ENCODE measurements at regions of chr17 and their contacts with region 1.

Region 1: GRCh38 chr17:76523084-76524037 is 14.1 kb downstream of the CYGB start:
- DNase-seq: peak; percentile 88
- ATAC-seq: peak; percentile 79
- H3K4me3 Mint-ChIP-seq: peak overlapping the region; percentile 29; the same call in 1 of the 2 replicates
- H3K27ac Mint-ChIP-seq: no peak overlapping the region
- H3K4me1 Mint-ChIP-seq: peaks cover 21% of the 10 kb centered on the region
- H3K27me3 Mint-ChIP-seq: peaks cover 24% of the 10 kb centered on the region
- CTCF ChIP-seq: peak; percentile 99

Region 2: DNA sequence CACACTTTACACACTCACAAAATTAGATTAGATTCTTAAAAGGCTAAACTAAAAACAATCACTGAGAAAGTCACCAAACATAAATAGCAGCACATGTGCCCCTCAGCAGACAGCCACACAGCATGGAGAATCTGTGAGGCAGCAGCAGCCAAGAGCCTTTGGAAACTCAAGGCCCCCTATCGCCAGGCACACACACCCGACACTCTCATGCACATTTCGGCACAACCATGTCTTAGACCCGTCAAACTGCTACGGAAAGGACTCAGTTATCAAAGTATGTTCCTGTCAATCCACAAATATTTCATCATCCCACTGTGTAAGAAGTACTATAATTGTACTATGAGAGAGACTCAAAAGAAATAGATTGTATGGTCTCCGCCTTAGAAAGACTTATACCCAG is 91.4 kb before region 1 on chr17:
- CTCF ChIA-PET with region 1: no interaction called
- POLR2A ChIA-PET with region 1: no interaction called
- DNase-seq: no peak
- ATAC-seq: peak; percentile 26; the same call in 1 of the 2 replicates
- H3K4me3 Mint-ChIP-seq: no peak overlapping the region
- H3K27ac Mint-ChIP-seq: peak overlapping the region; percentile 43
- H3K4me1 Mint-ChIP-seq: peaks cover 65% of the 10 kb centered on the region
- H3K27me3 Mint-ChIP-seq: no peaks in the 10 kb centered on the region
- CTCF ChIP-seq: no peak

Region 3: GRCh38 chr17:76467366-76467765 is 56.0 kb before region 1 on chr17 and contains the start of gene AANAT:
- CTCF ChIA-PET with region 1: interaction called, 14 read pairs
- POLR2A ChIA-PET with region 1: no interaction called
- DNase-seq: no peak
- ATAC-seq: no peak; the same call in 1 of the 2 replicates
- H3K4me3 Mint-ChIP-seq: no peak within 1 kb of the TSS
- H3K27ac Mint-ChIP-seq: no peak within 1 kb of the TSS
- H3K4me1 Mint-ChIP-seq: peaks cover 8% of the 10 kb centered on the region
- H3K27me3 Mint-ChIP-seq: no peaks in the 10 kb centered on the region; the same call in 1 of the 2 replicates
- CTCF ChIP-seq: no peak
- total RNA-seq, gene AANAT: 0.17 to 0.57 TPM in 2 of 3 replicates, not detected in the other

Region 4: DNA sequence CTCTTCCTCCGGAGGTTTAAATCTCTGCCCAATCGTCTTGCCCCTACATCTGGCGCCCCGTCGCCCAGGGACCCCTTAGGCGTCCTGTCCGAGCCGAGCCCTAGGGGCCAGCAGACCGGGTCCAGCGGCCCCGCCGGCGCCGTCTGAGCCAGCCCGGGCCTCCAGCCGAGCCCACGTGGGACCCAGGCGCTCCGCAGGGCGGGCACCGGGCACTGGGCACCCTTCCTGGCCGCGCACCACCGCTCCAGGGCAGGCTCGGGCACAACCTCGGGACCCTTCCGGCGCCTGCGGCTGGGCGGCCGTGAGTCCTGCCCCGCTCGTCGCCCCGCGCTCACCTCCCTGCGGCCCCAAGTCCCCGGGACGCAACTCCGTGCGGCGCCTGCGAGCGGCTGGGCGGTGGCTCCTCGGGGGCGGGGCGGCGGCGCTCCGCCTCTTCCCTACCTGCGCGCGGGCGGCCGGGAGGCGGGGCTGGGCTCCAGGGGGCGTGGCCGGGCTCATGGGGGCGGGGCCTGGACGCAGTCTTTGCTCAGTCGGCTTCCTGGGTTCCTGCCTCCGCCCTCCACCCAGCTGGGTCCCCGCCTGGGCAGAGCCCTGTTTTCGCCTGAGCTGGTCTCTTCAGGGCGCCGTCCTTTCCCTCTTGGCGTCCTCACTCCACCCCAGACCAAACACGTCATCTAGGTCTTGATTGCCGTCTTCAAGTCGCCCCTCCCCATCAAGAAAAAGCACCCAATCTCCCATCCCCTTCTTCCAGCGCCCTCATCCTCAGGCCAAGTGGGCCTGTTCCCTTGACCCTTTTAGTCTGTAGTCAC is 22.1 kb before region 1 on chr17 and contains the start of gene RHBDF2:
- CTCF ChIA-PET with region 1: interaction called, 40 read pairs
- POLR2A ChIA-PET with region 1: no interaction called
- DNase-seq: peak; percentile 95
- ATAC-seq: peak; percentile 82
- H3K4me3 Mint-ChIP-seq: peak within 1 kb of the TSS; percentile 82
- H3K27ac Mint-ChIP-seq: peak within 1 kb of the TSS; percentile 62
- H3K4me1 Mint-ChIP-seq: peaks cover 48% of the 10 kb centered on the region
- H3K27me3 Mint-ChIP-seq: peaks cover 5% of the 10 kb centered on the region
- CTCF ChIP-seq: no peak
- total RNA-seq, gene RHBDF2: 28.6 to 33.0 TPM (median 31.5 TPM) in 3 replicates

Region 5: GRCh38 chr17:76540381-76541300 is 17.3 kb after region 1 on chr17:
- CTCF ChIA-PET with region 1: interaction called, 123 read pairs
- POLR2A ChIA-PET with region 1: no interaction called
- DNase-seq: peak; percentile 95
- ATAC-seq: peak; percentile 91
- H3K4me3 Mint-ChIP-seq: peak overlapping the region; percentile 74
- H3K27ac Mint-ChIP-seq: peak overlapping the region; percentile 80
- H3K4me1 Mint-ChIP-seq: peaks cover 40% of the 10 kb centered on the region
- H3K27me3 Mint-ChIP-seq: peaks cover 43% of the 10 kb centered on the region
- CTCF ChIP-seq: no peak

Region 6: GRCh38 chr17:76557368-76558197 is 34.2 kb after region 1 on chr17:
- CTCF ChIA-PET with region 1: interaction called, 34 read pairs
- POLR2A ChIA-PET with region 1: no interaction called
- DNase-seq: peak; percentile 97
- ATAC-seq: peak; percentile 97
- H3K4me3 Mint-ChIP-seq: peak overlapping the region; percentile 97
- H3K27ac Mint-ChIP-seq: peak overlapping the region; percentile 97
- H3K4me1 Mint-ChIP-seq: peaks cover 43% of the 10 kb centered on the region
- H3K27me3 Mint-ChIP-seq: no peaks in the 10 kb centered on the region
- CTCF ChIP-seq: peak; percentile 31; the same call in 1 of the 2 replicates

Region 7: DNA sequence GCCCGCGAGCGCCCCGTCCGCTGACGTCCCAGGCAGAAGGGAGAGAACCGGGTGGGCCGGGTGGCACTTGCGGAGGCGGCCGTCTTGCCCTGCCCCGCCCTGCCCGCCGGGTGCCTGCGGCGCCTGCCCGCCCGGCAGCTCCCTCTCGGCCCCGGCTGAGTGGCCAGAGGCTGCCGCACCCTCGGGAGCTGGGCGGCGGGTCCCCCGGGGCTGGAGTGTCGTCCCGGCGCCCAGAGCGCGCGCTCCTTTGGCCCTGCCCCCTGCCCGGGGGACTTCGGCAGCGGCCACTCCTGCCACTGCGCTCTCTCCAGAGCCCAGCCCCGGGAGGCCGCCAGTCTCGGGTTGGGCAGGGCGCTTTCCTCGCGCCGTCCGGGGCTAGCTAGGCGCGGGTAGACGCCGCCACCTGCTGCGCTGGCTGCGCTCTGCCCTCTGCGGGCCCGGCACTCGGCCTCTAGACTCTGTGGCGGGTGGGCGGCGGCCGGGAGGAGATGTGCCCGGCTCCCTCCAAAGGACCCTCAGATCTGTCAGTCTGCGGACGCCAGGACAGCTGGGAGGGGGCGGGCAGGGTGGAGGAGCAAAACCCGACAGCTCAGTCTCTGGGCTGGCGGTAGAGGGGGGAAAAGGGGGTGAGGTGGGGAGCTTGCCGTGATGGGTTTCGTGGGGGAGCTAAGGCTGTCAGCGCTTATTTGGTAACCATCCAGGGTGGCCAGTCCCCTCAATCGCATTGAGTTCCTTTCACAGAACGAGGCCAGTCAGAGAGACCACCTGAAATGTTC is 62.6 kb after region 1 on chr17 and contains the start of gene ST6GALNAC2:
- CTCF ChIA-PET with region 1: interaction called, 17 read pairs
- POLR2A ChIA-PET with region 1: no interaction called
- DNase-seq: peak; percentile 37
- ATAC-seq: peak; percentile 33
- H3K4me3 Mint-ChIP-seq: peak within 1 kb of the TSS; percentile 71
- H3K27ac Mint-ChIP-seq: no peak within 1 kb of the TSS
- H3K4me1 Mint-ChIP-seq: peaks cover 18% of the 10 kb centered on the region
- H3K27me3 Mint-ChIP-seq: peaks cover 84% of the 10 kb centered on the region
- CTCF ChIP-seq: no peak
- total RNA-seq, gene ST6GALNAC2: 0.30 TPM in 1 of 3 replicates, not detected in the others

Region 8: GRCh38 chr17:76623271-76624146 is 100.1 kb after region 1 on chr17:
- CTCF ChIA-PET with region 1: interaction called, 41 read pairs
- POLR2A ChIA-PET with region 1: no interaction called
- DNase-seq: peak; percentile 79
- ATAC-seq: peak; percentile 95
- H3K4me3 Mint-ChIP-seq: no peak overlapping the region
- H3K27ac Mint-ChIP-seq: no peak overlapping the region
- H3K4me1 Mint-ChIP-seq: no peaks in the 10 kb centered on the region
- H3K27me3 Mint-ChIP-seq: 0 out of 2 replicates have a peak, but pooled peaks cover 5% of the 10 kb centered on the region
- CTCF ChIP-seq: peak; percentile 89

Region 9: GRCh38 chr17:76650504-76650903 is 127.1 kb after region 1 on chr17:
- CTCF ChIA-PET with region 1: no interaction called
- POLR2A ChIA-PET with region 1: no interaction called
- DNase-seq: no peak
- ATAC-seq: no peak
- H3K4me3 Mint-ChIP-seq: no peak overlapping the region
- H3K27ac Mint-ChIP-seq: no peak overlapping the region
- H3K4me1 Mint-ChIP-seq: no peaks in the 10 kb centered on the region
- H3K27me3 Mint-ChIP-seq: peaks cover 5% of the 10 kb centered on the region; the same call in 1 of the 2 replicates
- CTCF ChIP-seq: no peak